Activated CD4-positive, alpha-beta T cell treated with anti-CD3 and anti-CD28 coated beads, Interleukin-2, amount 10 ng/mL, durations not matched to agents 24 days and 14 days (primary cell): ENCODE measurements at regions of chr9 and their contacts with region 1.

Region 1: GRCh38 chr9:4984621-4985385 is at the start of gene JAK2:
- DNase-seq: peak; percentile 96
- H3K4me3 Mint-ChIP-seq: no peak within 1 kb of the TSS
- H3K27ac Mint-ChIP-seq: peak within 1 kb of the TSS; percentile 97
- H3K4me1 Mint-ChIP-seq: peaks cover 46% of the 10 kb centered on the region
- H3K27me3 Mint-ChIP-seq: no peaks in the 10 kb centered on the region
- total RNA-seq, gene JAK2: 29.3 and 29.9 TPM in 2 replicates

Region 2: DNA sequence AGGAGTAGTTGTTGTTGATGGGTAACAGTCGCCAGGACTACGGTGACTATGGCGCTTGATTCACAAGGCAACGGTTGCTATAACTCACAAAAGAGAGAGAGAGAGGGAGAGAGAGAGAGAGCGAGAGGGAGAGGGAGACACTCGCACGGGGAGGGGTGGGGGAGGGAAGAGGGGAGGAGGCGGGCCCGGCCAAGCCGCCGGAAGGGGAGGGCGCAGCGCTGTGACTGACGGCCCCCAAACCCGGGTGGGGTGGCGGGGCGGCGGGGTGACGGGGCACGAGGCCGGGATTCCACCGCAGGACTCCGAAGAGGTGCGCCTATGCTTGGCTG is 1459.0 kb before region 1 on chr9 and contains the start of gene RFX3:
- intact Hi-C with region 1: loop called (anchors 5 kb)
- DNase-seq: peak; percentile 96
- H3K4me3 Mint-ChIP-seq: peak within 1 kb of the TSS; percentile 89
- H3K27ac Mint-ChIP-seq: peak within 1 kb of the TSS; percentile 100
- H3K4me1 Mint-ChIP-seq: peaks cover 47% of the 10 kb centered on the region
- H3K27me3 Mint-ChIP-seq: peaks cover 2% of the 10 kb centered on the region
- total RNA-seq, gene RFX3: 11.6 and 12.8 TPM in 2 replicates

Region 3: GRCh38 chr9:4679268-4680172 is 305.3 kb before region 1 on chr9 and contains the start of gene CDC37L1:
- intact Hi-C with region 1: loop called (anchors 5 kb)
- DNase-seq: peak; percentile 100
- H3K4me3 Mint-ChIP-seq: no peak within 1 kb of the TSS
- H3K27ac Mint-ChIP-seq: no peak within 1 kb of the TSS
- H3K4me1 Mint-ChIP-seq: peaks cover 7% of the 10 kb centered on the region
- H3K27me3 Mint-ChIP-seq: no peaks in the 10 kb centered on the region
- total RNA-seq, gene CDC37L1: 11.3 and 12.1 TPM in 2 replicates

Region 4: DNA sequence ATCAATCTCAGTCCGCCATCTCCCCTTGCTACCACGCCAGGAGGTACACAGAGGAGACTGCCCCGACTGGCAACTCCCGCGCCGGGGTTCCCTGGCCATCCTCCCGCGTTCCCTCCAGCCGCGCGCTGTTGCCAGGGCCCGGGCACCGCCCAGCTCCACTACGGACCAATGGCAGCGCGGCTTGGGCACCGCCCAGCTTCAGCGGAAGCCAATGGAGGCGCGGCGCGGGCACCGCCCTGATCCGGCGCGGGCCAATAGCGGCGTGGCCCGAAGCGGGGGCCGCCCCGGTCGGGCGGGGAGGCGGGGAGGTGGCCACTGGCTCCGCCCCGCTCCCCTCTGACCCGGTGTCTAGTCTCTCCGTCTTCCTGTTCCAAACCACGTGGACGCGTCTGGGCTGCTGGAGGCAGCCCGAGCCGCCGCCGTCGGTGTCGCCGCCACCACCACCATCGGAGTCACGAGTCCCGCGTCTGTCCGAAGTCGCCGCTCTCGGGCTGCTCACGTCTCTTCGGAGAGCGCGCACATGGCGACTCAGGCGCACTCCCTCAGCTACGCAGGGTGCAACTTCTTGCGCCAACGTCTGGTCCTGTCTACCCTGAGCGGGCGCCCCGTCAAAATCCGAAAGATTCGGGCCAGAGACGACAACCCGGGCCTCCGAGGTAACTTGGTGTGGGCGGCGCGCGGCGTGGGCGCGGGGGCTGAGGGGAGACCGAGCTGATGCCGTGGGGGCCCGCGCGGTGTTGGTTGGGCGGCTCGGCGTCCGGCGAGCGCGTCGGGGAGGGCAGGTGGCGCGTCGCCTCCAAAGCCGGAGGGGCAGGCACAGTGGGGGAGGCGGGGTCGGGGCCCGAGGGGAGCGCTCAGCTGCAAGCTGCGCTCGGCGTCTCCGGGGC is 192.0 kb before region 1 on chr9 and contains the start of gene RCL1:
- intact Hi-C with region 1: loop called (anchors 1 kb)
- DNase-seq: peak; percentile 100
- H3K4me3 Mint-ChIP-seq: peak within 1 kb of the TSS; percentile 82
- H3K27ac Mint-ChIP-seq: peak within 1 kb of the TSS; percentile 95
- H3K4me1 Mint-ChIP-seq: peaks cover 51% of the 10 kb centered on the region
- H3K27me3 Mint-ChIP-seq: peaks cover 9% of the 10 kb centered on the region
- total RNA-seq, gene RCL1: 44.1 and 44.6 TPM in 2 replicates

Region 5: GRCh38 chr9:4939118-4939561 is 45.7 kb before region 1 on chr9:
- intact Hi-C with region 1: loop called (anchors 1 kb)
- DNase-seq: peak; percentile 83
- H3K4me3 Mint-ChIP-seq: peak overlapping the region; percentile 40
- H3K27ac Mint-ChIP-seq: peak overlapping the region; percentile 92
- H3K4me1 Mint-ChIP-seq: peaks cover 67% of the 10 kb centered on the region
- H3K27me3 Mint-ChIP-seq: no peaks in the 10 kb centered on the region

Region 6: GRCh38 chr9:5450359-5451091 is 465.7 kb after region 1 on chr9 and contains the start of gene CD274:
- intact Hi-C with region 1: loop called (anchors 2 kb)
- DNase-seq: peak; percentile 95
- H3K4me3 Mint-ChIP-seq: peak within 1 kb of the TSS; percentile 90
- H3K27ac Mint-ChIP-seq: peak within 1 kb of the TSS; percentile 90
- H3K4me1 Mint-ChIP-seq: peaks cover 56% of the 10 kb centered on the region
- H3K27me3 Mint-ChIP-seq: no peaks in the 10 kb centered on the region
- total RNA-seq, gene CD274: 52.1 and 57.6 TPM in 2 replicates

Region 7: DNA sequence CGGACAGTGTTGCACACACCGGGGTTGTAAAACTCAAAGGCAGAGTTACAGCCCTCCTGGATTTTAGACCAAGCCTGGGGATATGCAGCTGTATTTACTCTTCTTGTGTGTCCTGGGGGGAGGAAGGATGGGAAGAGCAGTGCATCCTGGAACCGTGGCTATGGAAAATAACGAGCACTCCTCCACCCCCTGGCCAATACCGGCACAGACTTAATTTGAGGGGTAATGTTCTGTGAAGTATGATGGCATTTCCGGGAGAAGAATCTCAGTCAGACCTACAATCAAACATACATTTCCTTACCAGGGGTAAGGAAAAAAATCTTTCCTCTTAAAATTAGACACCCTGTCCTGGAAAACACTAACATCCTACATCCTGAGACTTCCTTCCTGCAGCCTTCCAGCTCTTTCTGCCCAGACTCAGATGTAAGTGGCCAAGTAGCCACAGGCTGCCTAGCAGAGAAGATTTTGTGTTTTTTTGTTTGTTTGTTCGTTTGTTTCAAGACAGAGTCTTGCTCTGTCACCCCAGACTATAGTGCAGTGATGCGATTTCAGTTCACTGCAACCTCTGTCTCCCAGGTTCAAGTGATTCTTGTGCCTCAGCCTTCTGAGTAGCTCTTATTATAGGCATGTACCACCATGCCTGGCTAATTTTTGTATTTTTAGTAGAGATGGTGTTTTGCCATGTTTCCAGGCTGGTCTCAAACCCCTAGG is 859.1 kb after region 1 on chr9:
- intact Hi-C with region 1: loop called (anchors 5 kb)
- DNase-seq: peak; percentile 63
- H3K4me3 Mint-ChIP-seq: peak overlapping the region; percentile 73
- H3K27ac Mint-ChIP-seq: peak overlapping the region; percentile 91
- H3K4me1 Mint-ChIP-seq: peaks cover 68% of the 10 kb centered on the region
- H3K27me3 Mint-ChIP-seq: no peaks in the 10 kb centered on the region